Prostate gland (tissue), 2 donors: ENCODE measurements at regions of chr12 and their contacts with region 1.

Region 1: GRCh38 chr12:99810718-99811593 is 163.4 kb downstream of the GARIN6 start:
- DNase-seq: no peak
- H3K4me3 ChIP-seq: no peak overlapping the region
- H3K27ac ChIP-seq: no peak overlapping the region
- H3K4me1 ChIP-seq: no peaks in the 10 kb centered on the region
- H3K27me3 ChIP-seq: no peaks in the 10 kb centered on the region
- CTCF ChIP-seq: peak in 3 of 4 experiments; percentile 33 to 51 (median 45)
- POLR2A ChIP-seq: no peak

Region 2: GRCh38 chr12:99147130-99147529 is 663.8 kb before region 1 on chr12:
- intact Hi-C with region 1: no loop called
- DNase-seq: no peak
- H3K4me3 ChIP-seq: no peak overlapping the region
- H3K27ac ChIP-seq: no peak overlapping the region
- H3K4me1 ChIP-seq: no peaks in the 10 kb centered on the region
- H3K27me3 ChIP-seq: no peaks in the 10 kb centered on the region
- CTCF ChIP-seq: no peak
- POLR2A ChIP-seq: no peak

Region 3: GRCh38 chr12:99907210-99907609 is 96.3 kb after region 1 on chr12:
- intact Hi-C with region 1: loop called (anchors 10 kb)
- DNase-seq: no peak
- H3K4me3 ChIP-seq: no peak overlapping the region
- H3K27ac ChIP-seq: no peak overlapping the region
- H3K4me1 ChIP-seq: no peaks in the 10 kb centered on the region
- H3K27me3 ChIP-seq: no peaks in the 10 kb centered on the region
- CTCF ChIP-seq: no peak
- POLR2A ChIP-seq: no peak

Region 4: DNA sequence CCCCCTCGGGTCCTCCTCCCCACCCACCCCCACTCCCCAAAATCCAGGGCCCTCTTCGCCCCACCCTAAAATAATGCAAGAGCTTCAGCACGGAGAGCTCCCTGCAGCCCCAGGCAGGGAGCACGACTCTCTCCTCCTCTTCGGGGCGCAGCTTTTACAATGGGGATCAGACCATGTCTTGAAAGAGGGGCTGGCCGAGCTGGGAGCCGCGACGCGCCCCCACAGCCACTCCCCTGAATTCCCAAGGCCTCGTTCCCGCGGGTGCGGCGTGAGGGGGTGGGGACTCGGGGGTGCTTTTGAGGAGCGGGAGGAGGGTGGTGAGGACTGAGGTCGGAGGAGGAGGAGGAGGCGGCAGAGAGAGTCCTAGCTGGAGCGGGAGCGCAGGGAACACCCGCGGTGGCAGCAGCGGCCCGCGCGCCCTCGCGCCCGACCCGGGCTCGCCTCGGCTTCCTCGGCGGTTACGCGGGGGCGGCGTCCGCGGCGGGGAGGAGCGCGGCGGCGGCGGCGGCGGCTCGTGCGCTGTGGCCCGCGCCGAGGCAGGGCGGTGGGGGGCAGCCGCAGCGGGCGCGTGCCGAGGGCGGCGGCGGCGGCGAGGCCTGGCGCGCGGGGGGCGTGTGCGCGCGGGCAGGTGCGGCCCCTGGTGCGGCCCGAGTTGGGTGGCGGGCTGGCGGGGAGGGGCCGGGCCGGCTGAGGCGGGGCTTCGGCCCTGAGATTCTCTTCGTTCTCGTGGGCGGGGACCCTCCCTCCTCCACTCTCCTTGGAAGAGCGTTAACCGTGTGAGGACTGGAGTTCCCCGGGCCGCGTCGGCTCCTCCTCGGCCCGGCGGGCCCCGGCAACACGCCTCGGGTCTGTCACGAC is 173.5 kb after region 1 on chr12 and contains the start of gene ANKS1B:
- intact Hi-C with region 1: loop called (anchors 10 kb)
- DNase-seq: peak; percentile 49
- H3K4me3 ChIP-seq: peak within 1 kb of the TSS; percentile 49 to 51
- H3K27ac ChIP-seq: peak within 1 kb of the TSS; percentile 60 to 70
- H3K4me1 ChIP-seq: no peaks in the 10 kb centered on the region
- H3K27me3 ChIP-seq: no peaks in the 10 kb centered on the region
- CTCF ChIP-seq: no peak
- POLR2A ChIP-seq: no peak
- total RNA-seq, gene ANKS1B: 13.0 to 17.4 TPM

Region 5: DNA sequence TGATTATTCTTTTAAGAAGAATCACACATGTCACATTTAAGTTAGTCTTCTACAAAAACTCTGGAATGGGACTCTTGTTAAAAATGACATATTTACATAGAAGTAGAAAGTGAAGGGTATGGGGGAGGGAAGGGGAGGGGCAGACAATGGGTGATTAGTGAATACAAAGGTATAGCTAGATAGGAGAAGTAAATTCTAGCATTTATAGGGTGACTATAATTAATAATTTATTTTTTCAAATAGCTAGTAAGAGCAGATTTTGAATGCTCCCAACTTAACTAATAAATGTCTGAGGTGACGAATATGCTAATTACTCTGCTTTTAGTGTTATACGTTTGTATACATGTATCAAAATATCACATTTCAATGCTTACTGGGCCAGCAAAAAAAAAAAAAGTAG is 272.4 kb after region 1 on chr12:
- intact Hi-C with region 1: no loop called
- DNase-seq: no peak
- H3K4me3 ChIP-seq: no peak overlapping the region
- H3K27ac ChIP-seq: no peak overlapping the region
- H3K4me1 ChIP-seq: no peaks in the 10 kb centered on the region
- H3K27me3 ChIP-seq: no peaks in the 10 kb centered on the region
- CTCF ChIP-seq: no peak
- POLR2A ChIP-seq: no peak

Region 6: DNA sequence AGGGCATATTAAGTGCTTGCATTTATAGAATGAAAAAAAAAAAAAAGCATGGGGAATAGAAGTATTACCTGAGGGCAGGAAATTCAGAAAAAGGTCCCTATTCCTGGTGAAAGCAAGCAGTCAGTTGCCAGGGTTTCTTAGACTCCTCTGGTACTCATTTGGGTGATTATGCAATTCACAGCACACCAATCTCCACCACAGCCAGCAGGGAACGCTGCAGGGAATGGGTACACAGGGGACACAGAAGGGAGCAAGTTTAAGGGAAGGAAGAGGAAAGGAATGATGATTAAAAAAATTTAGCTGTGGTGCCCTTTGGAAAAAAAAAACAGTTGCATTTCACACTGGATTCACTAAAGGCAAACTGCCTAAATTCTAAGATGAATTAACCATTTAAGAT is 317.6 kb after region 1 on chr12:
- intact Hi-C with region 1: loop called (anchors 10 kb)
- DNase-seq: no peak
- H3K4me3 ChIP-seq: no peak overlapping the region
- H3K27ac ChIP-seq: no peak overlapping the region
- H3K4me1 ChIP-seq: peaks cover 7% of the 10 kb centered on the region
- H3K27me3 ChIP-seq: no peaks in the 10 kb centered on the region
- CTCF ChIP-seq: peak in 1 of 4 experiments; percentile 16
- POLR2A ChIP-seq: no peak